GM10248 (cell line): ENCODE measurements at regions of chr13 and their contacts with region 1.

Region 1: GRCh38 chr13:40464337-40465014 is 202.0 kb downstream of the FOXO1 start:
- DNase-seq: no peak
- CTCF ChIP-seq: no peak

Region 2: GRCh38 chr13:40452741-40453667 is 11.5 kb before region 1 on chr13:
- CTCF ChIA-PET with region 1: interaction called, 15 read pairs
- POLR2A ChIA-PET with region 1: no interaction called
- DNase-seq: no peak
- CTCF ChIP-seq: no peak